CD8-positive, alpha-beta T cell (primary cell): ENCODE measurements at regions of chr1 and their contacts with region 1.

Region 1: DNA sequence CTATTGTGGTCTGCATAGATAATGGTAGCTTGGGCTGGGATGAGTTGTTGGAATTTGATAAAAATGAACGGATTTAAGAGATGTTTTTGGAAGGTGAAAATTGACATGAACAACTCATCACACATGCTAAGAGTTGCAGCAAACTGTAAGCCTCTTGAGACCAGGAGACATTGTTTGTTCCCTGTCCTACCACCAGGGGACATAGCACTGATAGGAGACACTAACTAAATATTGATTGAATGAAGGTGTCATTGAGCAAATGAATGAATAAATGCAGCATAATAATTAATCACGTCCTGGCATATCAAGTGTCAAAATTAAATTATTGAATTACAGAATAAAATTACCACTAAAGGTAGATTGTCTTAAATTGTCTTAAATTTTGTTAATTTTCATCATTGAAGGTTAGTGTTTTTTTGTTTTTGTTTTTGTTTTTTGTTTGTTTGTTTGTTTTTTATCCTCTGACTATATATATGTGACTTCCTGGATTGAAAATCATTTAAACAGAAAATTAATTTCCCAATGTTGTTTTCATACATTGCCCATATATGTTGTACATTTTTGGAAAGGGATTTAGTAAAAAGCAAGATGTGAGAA is 285.3 kb upstream of the C1orf105 start:
- DNase-seq: peak in 3 of 9 experiments; percentile 25 to 66 (median 53)
- ATAC-seq: peak; percentile 34
- H3K4me3 ChIP-seq: no peak overlapping the region
- H3K4me3 Mint-ChIP-seq: no peak overlapping the region
- H3K27ac ChIP-seq: no peak overlapping the region
- H3K27ac Mint-ChIP-seq: no peak overlapping the region
- H3K4me1 ChIP-seq: no peaks in the 10 kb centered on the region
- H3K4me1 Mint-ChIP-seq: peaks cover 2% of the 10 kb centered on the region
- H3K27me3 ChIP-seq: no peaks in the 10 kb centered on the region
- H3K27me3 Mint-ChIP-seq: no peaks in the 10 kb centered on the region
- CTCF ChIP-seq: peak; percentile 57

Region 2: DNA sequence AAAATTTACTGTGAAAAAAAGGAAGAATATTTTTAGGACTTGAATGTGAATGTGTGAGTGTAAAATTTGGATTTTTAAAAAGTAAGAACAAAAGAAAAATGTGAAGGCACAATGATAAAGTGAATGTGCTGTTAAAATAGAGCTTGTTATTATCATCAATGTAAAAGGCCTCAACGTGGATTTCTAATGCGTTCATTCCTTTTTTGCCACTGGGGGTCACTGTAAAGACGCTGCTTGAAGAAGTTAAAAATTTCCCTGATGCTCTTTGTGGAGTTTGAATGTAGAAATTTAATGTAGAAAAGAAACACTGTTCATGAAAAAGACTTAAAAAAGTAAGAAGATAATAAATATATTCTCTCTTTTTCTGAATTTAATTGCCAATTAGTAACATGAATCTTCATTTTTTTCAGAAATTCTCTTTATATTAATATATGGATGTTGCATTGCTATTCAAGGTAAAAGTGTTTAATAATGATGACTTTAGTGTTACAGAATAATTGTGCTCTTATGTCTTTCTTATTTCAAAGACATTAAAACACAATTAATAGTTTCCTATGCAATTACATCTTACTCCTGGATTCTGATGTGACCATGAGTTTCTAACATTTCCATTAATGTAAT is 132.3 kb before region 1 on chr1:
- CTCF ChIA-PET with region 1: no interaction called
- POLR2A ChIA-PET with region 1: no interaction called
- intact Hi-C with region 1: loop called in 1 of 2 experiments (anchors 10 kb)
- DNase-seq: peak in 4 of 9 experiments; percentile 9 to 66 (median 36)
- ATAC-seq: peak; percentile 44
- H3K4me3 ChIP-seq: no peak overlapping the region
- H3K4me3 Mint-ChIP-seq: no peak overlapping the region
- H3K27ac ChIP-seq: no peak overlapping the region
- H3K27ac Mint-ChIP-seq: no peak overlapping the region
- H3K4me1 ChIP-seq: no peaks in the 10 kb centered on the region
- H3K4me1 Mint-ChIP-seq: no peaks in the 10 kb centered on the region
- H3K27me3 ChIP-seq: no peaks in the 10 kb centered on the region
- H3K27me3 Mint-ChIP-seq: peaks cover under 1% of the 10 kb centered on the region
- CTCF ChIP-seq: peak; percentile 72